ENCODE measurements at regions of chr9 and their contacts with region 1.

Region 1: GRCh38 chr9:81689343-81690190 is at the start of gene TLE1:
- DNase-seq: peak; percentile 100
- ATAC-seq: peak; percentile 90
- H3K4me3 ChIP-seq: peak within 1 kb of the TSS; percentile 98
- H3K27ac ChIP-seq: peak within 1 kb of the TSS; percentile 87
- H3K4me1 ChIP-seq: peaks cover 10% of the 10 kb centered on the region
- H3K27me3 ChIP-seq: no peaks in the 10 kb centered on the region
- CTCF ChIP-seq: no peak
- POLR2A ChIP-seq: peak; percentile 59
- RAD21 ChIP-seq: peak; percentile 36
- total RNA-seq, gene TLE1: 36.0 and 40.3 TPM in 2 replicates

Region 2: GRCh38 chr9:80605129-80605528 is 1084.4 kb before region 1 on chr9:
- CTCF ChIA-PET with region 1: no interaction called
- POLR2A ChIA-PET with region 1: no interaction called
- dilution Hi-C with region 1: no loop called
- in situ Hi-C with region 1: no loop called
- intact Hi-C with region 1: loop called (anchors 1 kb)
- DNase-seq: peak; percentile 66
- ATAC-seq: 0 out of 2 replicates have a peak, but pooled peaks have one; percentile 51
- H3K4me3 ChIP-seq: no peak overlapping the region
- H3K27ac ChIP-seq: no peak overlapping the region
- H3K4me1 ChIP-seq: no peaks in the 10 kb centered on the region
- H3K27me3 ChIP-seq: no peaks in the 10 kb centered on the region
- CTCF ChIP-seq: peak; percentile 53
- POLR2A ChIP-seq: no peak
- RAD21 ChIP-seq: peak; percentile 67

Region 3: DNA sequence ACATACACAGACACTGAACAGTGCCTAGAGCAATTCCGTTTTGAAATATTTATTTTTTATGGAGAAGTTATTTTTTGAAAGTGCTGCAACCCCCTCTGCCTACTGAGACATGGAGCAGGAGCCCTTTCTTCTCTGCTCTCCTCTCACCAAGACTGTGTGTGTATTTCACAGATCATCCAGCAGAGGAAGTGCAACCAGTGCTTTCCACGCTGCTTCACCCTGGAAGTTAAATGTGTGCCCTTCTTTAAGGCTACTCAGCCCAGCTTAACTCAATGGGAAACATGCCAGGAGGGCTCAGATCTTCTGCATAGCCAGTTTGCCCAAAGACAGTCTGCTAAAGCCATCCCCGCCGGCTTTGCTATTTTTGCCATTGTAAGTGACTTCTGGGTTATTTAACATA is 606.5 kb before region 1 on chr9:
- CTCF ChIA-PET with region 1: no interaction called
- POLR2A ChIA-PET with region 1: no interaction called
- dilution Hi-C with region 1: no loop called
- in situ Hi-C with region 1: no loop called
- intact Hi-C with region 1: loop called (anchors 5 kb)
- DNase-seq: peak; percentile 40
- ATAC-seq: peak; percentile 65
- H3K4me3 ChIP-seq: no peak overlapping the region
- H3K27ac ChIP-seq: no peak overlapping the region
- H3K4me1 ChIP-seq: peaks cover 2% of the 10 kb centered on the region; the same call in 1 of the 2 replicates
- H3K27me3 ChIP-seq: no peaks in the 10 kb centered on the region; the same call in 1 of the 2 replicates
- CTCF ChIP-seq: 0 out of 2 replicates have a peak, but pooled peaks have one; percentile 16
- POLR2A ChIP-seq: no peak
- RAD21 ChIP-seq: peak; percentile 29; the same call in 1 of the 2 replicates

Region 4: DNA sequence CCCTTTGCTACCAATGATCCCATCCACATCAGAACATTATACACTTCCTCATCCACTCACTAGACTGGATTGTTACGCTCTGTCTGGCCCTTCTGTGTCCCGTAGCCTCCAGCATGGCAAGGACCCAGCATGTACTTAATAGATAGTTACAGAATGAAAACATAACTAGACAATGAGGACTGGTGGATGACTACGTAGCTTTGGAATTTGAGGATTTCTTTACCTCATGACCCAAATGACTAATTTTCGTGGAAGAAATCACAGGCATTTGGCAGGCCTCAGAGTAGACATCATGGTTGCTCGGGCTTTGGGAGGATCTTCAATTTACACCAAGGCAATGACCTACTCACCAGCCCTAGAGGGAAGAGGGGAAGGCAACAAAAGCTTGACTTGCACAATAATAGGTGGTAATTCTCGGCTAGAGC is 300.0 kb before region 1 on chr9:
- CTCF ChIA-PET with region 1: no interaction called
- POLR2A ChIA-PET with region 1: no interaction called
- dilution Hi-C with region 1: no loop called
- in situ Hi-C with region 1: no loop called
- intact Hi-C with region 1: loop called (anchors 2 kb)
- DNase-seq: peak; percentile 99
- ATAC-seq: peak; percentile 92
- H3K4me3 ChIP-seq: no peak overlapping the region
- H3K27ac ChIP-seq: peak overlapping the region; percentile 44
- H3K4me1 ChIP-seq: peaks cover 17% of the 10 kb centered on the region
- H3K27me3 ChIP-seq: no peaks in the 10 kb centered on the region
- CTCF ChIP-seq: no peak
- POLR2A ChIP-seq: no peak
- RAD21 ChIP-seq: no peak; the same call in 1 of the 2 replicates

Region 5: DNA sequence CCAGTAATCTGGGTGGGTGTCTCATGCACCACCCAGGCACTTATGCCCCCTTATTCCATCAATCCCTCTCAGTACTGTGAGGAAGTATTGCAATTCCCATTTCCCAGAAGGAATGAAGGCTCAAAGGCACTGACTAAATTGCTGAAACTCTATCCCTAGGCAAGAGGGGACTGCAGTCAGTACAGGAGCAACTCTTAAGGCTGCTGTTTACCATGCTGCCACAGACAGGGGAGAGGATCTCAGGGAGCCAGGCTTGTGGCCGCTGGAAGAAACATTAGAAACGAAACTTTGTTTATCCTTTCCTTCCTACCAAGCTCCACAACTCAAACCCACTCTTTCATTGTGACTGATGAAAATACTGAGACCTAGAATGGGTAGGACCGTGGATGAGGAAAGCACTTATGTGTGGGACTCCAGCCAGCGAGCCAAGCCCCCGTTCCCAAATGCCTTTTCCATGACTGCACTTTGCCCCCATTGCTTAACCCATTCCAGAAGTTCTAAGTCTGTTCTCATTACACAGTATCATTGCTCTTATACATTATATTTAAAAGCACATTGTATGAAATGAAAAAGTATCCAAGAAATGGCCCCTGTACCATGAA is 54.6 kb before region 1 on chr9:
- CTCF ChIA-PET with region 1: no interaction called
- POLR2A ChIA-PET with region 1: no interaction called
- dilution Hi-C with region 1: no loop called
- in situ Hi-C with region 1: no loop called
- intact Hi-C with region 1: loop called (anchors 1 kb)
- DNase-seq: peak; percentile 79
- ATAC-seq: peak; percentile 56
- H3K4me3 ChIP-seq: peak overlapping the region; percentile 9; the same call in 1 of the 2 replicates
- H3K27ac ChIP-seq: peak overlapping the region; percentile 46; the same call in 1 of the 2 replicates
- H3K4me1 ChIP-seq: peaks cover 27% of the 10 kb centered on the region
- H3K27me3 ChIP-seq: no peaks in the 10 kb centered on the region
- CTCF ChIP-seq: no peak
- POLR2A ChIP-seq: no peak
- RAD21 ChIP-seq: no peak

Region 6: DNA sequence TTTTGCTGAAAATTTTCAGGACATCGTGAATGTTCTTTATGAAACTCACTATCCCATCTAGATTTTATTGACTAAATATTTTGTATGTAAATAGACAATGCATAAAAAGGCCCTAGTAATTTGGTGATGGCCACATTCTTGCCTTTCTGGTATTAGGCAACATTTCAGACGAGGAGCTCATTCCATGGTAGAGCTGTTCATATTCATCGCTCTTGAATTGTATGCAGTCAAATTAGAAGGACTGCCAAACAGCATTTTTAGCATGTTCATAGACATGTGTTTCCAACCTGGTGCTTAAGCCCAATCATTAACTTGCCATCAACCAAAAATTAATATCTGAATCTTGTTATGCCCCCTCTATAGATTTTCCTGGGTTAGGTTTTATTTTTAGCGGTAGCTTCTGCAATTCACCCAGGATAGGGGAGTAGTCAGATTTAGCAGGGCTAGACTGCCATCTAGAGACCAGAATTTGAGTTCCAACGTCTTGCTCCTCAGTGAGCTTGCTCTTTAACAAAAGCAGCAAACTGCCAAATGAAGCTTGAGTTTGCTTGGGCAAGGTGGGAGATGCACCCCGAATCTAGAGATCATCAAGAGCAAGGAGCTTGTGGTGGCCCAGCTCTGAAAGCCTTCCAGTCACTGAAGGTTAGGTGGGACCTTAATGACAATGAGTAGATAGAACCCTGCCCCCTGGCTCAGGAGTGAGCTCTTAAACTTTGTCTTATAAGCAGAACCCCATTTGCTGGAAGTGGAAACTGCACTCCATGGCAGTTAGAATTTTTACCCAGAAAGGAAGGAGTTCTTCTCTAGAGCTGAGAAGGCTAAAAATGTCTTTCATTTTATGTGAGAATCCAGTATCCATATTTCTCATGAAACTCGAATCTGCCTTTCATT is 917.2 kb after region 1 on chr9:
- CTCF ChIA-PET with region 1: interaction called, 4 read pairs
- POLR2A ChIA-PET with region 1: no interaction called
- dilution Hi-C with region 1: no loop called
- in situ Hi-C with region 1: loop called (anchors 10 kb)
- intact Hi-C with region 1: loop called (anchors 1 kb)
- DNase-seq: peak; percentile 81
- ATAC-seq: peak; percentile 74
- H3K4me3 ChIP-seq: no peak overlapping the region
- H3K27ac ChIP-seq: no peak overlapping the region
- H3K4me1 ChIP-seq: peaks cover 5% of the 10 kb centered on the region; the same call in 1 of the 2 replicates
- H3K27me3 ChIP-seq: peaks cover 7% of the 10 kb centered on the region
- CTCF ChIP-seq: peak; percentile 80
- POLR2A ChIP-seq: peak; percentile 38; the same call in 1 of the 2 replicates
- RAD21 ChIP-seq: peak; percentile 89

Measured in IMR-90 (cell line).